CD4-positive, alpha-beta memory T cell (primary cell): ENCODE measurements at regions of chr9 and their contacts with region 1.

Region 1: DNA sequence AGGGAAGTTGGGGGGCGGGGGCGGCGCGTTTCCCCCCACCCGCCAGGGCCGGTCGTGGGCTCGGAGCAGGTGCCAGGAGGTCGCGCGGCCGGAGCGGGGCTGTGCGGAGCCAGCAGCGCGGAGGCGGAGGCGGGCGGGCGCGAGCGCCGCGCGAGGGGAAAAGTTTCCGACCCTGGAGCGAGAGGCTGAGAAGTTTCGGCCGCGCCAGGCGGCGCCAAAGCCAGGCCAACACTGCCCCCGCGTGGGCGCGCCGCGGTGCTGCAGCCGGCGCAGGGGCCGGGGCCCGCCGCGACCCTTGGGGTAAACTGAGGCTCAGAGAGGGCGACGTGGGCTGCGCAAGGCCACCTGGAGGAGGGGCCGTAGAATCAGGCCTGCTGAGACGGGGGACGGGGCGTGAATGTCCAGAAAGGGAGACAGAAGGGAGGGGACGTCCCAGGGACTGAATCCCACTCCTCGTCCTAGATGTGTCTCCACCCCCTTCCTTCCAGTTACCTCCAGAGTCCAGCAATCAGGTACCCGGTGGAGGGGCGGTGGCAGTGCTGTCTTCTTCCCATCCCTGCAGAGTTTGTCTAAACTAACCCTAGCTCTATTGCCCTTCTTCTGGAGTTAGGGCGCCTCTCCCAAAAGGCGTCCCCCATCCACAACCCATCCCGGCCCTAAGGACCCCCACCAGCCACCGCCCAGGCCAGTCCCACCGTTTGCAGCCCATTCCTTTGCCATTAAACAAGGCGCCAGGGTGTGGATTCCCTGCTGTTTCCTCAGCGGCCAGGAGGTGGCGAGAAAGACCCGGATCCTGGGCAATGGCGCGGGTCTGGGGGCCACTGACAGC is 10.2 kb downstream of the C9orf50 start:
- DNase-seq: peak; percentile 72 to 76 (median 74)
- H3K4me3 ChIP-seq: peak overlapping the region; percentile 61 to 70
- H3K4me3 Mint-ChIP-seq: peak overlapping the region; percentile 78 to 95 (median 81)
- H3K27ac ChIP-seq: peak overlapping the region; percentile 50
- H3K27ac Mint-ChIP-seq: peak overlapping the region; percentile 65 to 95 (median 88)
- H3K4me1 ChIP-seq: peaks cover 28% of the 10 kb centered on the region
- H3K4me1 Mint-ChIP-seq: peaks cover 16 to 45% (median 33%) of the 10 kb centered on the region in 4 donors
- H3K27me3 ChIP-seq: no peaks in the 10 kb centered on the region
- H3K27me3 Mint-ChIP-seq: no peaks in the 10 kb centered on the region

Region 2: GRCh38 chr9:128786681-128787601 is 823.7 kb before region 1 on chr9 and contains the start of gene TBC1D13:
- CTCF ChIA-PET with region 1: no interaction called
- POLR2A ChIA-PET with region 1: no interaction called
- intact Hi-C with region 1: no loop called
- DNase-seq: peak; percentile 90 to 92 (median 90)
- H3K4me3 ChIP-seq: peak within 1 kb of the TSS; percentile 76 to 80
- H3K4me3 Mint-ChIP-seq: peak within 1 kb of the TSS; percentile 87 to 96 (median 90)
- H3K27ac ChIP-seq: peak within 1 kb of the TSS; percentile 72
- H3K27ac Mint-ChIP-seq: peak within 1 kb of the TSS; percentile 90 to 96 (median 96)
- H3K4me1 ChIP-seq: peaks cover 19% of the 10 kb centered on the region
- H3K4me1 Mint-ChIP-seq: peaks cover 11 to 30% (median 16%) of the 10 kb centered on the region in 4 donors
- H3K27me3 ChIP-seq: no peaks in the 10 kb centered on the region
- H3K27me3 Mint-ChIP-seq: no peaks in the 10 kb centered on the region
- total RNA-seq, gene TBC1D13: 28.0 to 31.4 TPM

Region 3: GRCh38 chr9:129131300-129132145 is 479.2 kb before region 1 on chr9:
- CTCF ChIA-PET with region 1: interaction called, 24 read pairs
- POLR2A ChIA-PET with region 1: no interaction called
- intact Hi-C with region 1: loop called (anchors 1 kb)
- DNase-seq: peak; percentile 81 to 85 (median 82)
- H3K4me3 ChIP-seq: no peak overlapping the region
- H3K4me3 Mint-ChIP-seq: no peak overlapping the region
- H3K27ac ChIP-seq: no peak overlapping the region
- H3K27ac Mint-ChIP-seq: peak overlapping the region in 6 of 7 donors; percentile 3 to 64 (median 48)
- H3K4me1 ChIP-seq: peaks cover 8% of the 10 kb centered on the region
- H3K4me1 Mint-ChIP-seq: peaks cover 0 to 13% (median 6%) of the 10 kb centered on the region in 4 donors
- H3K27me3 ChIP-seq: no peaks in the 10 kb centered on the region
- H3K27me3 Mint-ChIP-seq: no peaks in the 10 kb centered on the region

Region 4: GRCh38 chr9:129166623-129167557 is 443.8 kb before region 1 on chr9:
- CTCF ChIA-PET with region 1: interaction called, 17 read pairs
- POLR2A ChIA-PET with region 1: no interaction called
- intact Hi-C with region 1: no loop called
- DNase-seq: peak in 1 of 5 donors; percentile 4
- H3K4me3 ChIP-seq: no peak overlapping the region
- H3K4me3 Mint-ChIP-seq: peak overlapping the region in 6 of 8 donors; percentile 43 to 74 (median 67)
- H3K27ac ChIP-seq: no peak overlapping the region
- H3K27ac Mint-ChIP-seq: peak overlapping the region in 3 of 7 donors; percentile 13 to 52 (median 52)
- H3K4me1 ChIP-seq: peaks cover 11% of the 10 kb centered on the region
- H3K4me1 Mint-ChIP-seq: peaks cover 10 to 26% (median 12%) of the 10 kb centered on the region in 4 donors
- H3K27me3 ChIP-seq: no peaks in the 10 kb centered on the region
- H3K27me3 Mint-ChIP-seq: no peaks in the 10 kb centered on the region

Region 5: DNA sequence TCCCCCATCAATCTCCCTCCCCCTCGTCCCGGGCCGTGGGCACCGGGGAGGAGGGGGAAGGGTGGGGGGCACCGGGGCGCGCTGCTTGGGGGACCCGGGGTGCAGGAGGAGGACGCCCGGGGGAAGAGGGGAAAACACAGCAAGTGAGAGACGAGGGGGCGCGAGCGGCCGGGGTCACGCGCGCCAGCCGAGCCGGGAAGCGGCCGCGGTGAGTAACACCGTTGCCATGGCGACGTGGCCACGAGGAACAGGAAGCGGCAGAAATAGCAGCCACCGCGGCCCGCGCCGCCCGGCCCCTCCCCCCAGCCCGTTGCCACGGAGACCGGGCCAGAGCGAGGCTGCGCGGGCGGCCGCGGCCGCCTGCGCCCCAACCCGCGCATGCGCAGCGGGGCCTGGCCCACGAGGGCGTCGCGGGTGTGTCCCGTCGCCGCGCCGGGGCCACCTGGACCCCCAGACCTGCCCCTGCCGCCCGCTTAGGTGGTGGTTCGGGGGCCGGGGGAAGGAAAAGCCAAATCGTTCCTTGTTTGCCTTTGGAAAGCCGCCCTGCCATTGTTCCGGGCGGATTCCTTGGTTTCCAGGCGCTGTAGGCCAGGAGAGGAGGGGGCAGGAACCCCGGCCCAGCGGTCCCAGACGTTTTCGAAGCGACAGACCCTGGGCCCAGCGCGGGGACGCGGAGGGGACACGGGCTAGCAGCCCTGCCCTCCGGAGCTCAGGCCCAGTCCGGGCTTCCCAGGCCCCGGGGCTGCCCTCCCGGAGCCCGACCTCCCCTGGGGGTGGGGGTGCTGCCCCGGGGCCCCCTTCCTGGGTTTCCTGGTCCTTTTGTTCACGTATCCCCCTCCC is 196.9 kb before region 1 on chr9:
- CTCF ChIA-PET with region 1: no interaction called
- POLR2A ChIA-PET with region 1: interaction called, 4 read pairs
- intact Hi-C with region 1: loop called (anchors 1 kb)
- DNase-seq: peak; percentile 96 to 99 (median 98)
- H3K4me3 ChIP-seq: peak overlapping the region; percentile 29 to 53
- H3K4me3 Mint-ChIP-seq: peak overlapping the region; percentile 82 to 91 (median 86)
- H3K27ac ChIP-seq: peak overlapping the region; percentile 97
- H3K27ac Mint-ChIP-seq: peak overlapping the region; percentile 96 to 99 (median 98)
- H3K4me1 ChIP-seq: peaks cover 27% of the 10 kb centered on the region
- H3K4me1 Mint-ChIP-seq: peaks cover 16 to 34% (median 24%) of the 10 kb centered on the region in 4 donors
- H3K27me3 ChIP-seq: no peaks in the 10 kb centered on the region
- H3K27me3 Mint-ChIP-seq: no peaks in the 10 kb centered on the region

Region 6: DNA sequence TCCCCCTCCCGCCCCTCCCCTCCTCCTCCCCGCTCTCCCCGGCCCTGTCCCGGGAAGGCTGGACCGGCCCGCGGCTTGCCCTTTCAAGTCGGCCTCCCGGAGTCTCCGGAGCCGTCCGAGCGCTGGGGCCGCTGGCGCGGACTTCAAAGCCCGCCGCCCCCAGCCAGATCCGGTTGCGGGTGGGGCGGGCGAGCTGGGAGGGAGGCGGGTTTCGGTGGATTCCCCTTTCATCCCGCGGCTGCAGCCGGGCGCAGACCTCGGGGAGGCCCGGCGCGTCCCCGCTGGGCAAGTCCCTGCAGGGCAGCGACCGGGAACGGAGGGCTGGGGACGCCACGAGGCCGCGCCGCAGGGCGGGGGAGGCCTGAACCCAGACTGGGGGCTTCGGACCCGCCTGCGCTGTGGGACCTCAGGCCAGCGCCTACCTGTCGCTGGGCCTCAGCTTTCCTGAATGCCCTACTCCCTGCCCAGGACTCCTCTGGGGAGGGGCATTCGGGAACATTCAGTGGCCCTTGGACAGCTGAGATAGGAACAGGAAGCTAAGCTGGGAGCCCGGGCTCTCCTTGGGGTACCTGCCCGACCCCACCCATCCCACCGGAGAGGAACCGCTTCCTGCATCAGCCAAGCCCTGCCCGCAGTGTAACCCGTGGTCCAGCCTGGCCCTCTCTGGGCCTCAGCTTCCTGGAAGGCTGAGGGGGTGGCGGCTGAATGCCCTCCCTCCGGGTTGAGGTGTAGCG is 13.2 kb before region 1 on chr9:
- CTCF ChIA-PET with region 1: interaction called, 5 read pairs
- POLR2A ChIA-PET with region 1: interaction called, 15 read pairs
- intact Hi-C with region 1: no loop called
- DNase-seq: peak in 1 of 5 donors; percentile 60
- H3K4me3 ChIP-seq: peak overlapping the region in 1 of 2 donors; percentile 45
- H3K4me3 Mint-ChIP-seq: peak overlapping the region; percentile 33 to 79 (median 68)
- H3K27ac ChIP-seq: peak overlapping the region; percentile 47
- H3K27ac Mint-ChIP-seq: peak overlapping the region in 5 of 7 donors; percentile 43 to 87 (median 71)
- H3K4me1 ChIP-seq: peaks cover 20% of the 10 kb centered on the region
- H3K4me1 Mint-ChIP-seq: peaks cover 9 to 39% (median 16%) of the 10 kb centered on the region in 4 donors
- H3K27me3 ChIP-seq: peaks cover 6% of the 10 kb centered on the region
- H3K27me3 Mint-ChIP-seq: no peaks in the 10 kb centered on the region